Left ventricle myocardium superior (tissue), 1 donor: ENCODE measurements at regions of chr14 and their contacts with region 1.

Region 1: GRCh38 chr14:24806061-24806678 is 172.2 kb upstream of the GZMB start:
- DNase-seq: peak; percentile 83
- ATAC-seq: peak; percentile 80

Region 2: GRCh38 chr14:25042362-25043299 is 236.5 kb after region 1 on chr14:
- intact Hi-C with region 1: loop called (anchors 5 kb)
- DNase-seq: no peak
- ATAC-seq: peak; percentile 35

Region 3: GRCh38 chr14:25140411-25140810 is 334.2 kb after region 1 on chr14:
- intact Hi-C with region 1: loop called (anchors 10 kb)
- DNase-seq: no peak
- ATAC-seq: peak; percentile 28